ENCODE measurements at regions of chr10 and their contacts with region 1.

Region 1: GRCh38 chr10:7484456-7485243 is 73.8 kb upstream of the SFMBT2 start:
- DNase-seq: peak in 8 of 9 donors; percentile 49 to 89 (median 82)
- ATAC-seq: peak; percentile 92
- H3K4me3 ChIP-seq: peak overlapping the region; percentile 34
- H3K4me3 Mint-ChIP-seq: peak overlapping the region; percentile 54 to 85 (median 78)
- H3K27ac ChIP-seq: peak overlapping the region; percentile 73
- H3K27ac Mint-ChIP-seq: peak overlapping the region; percentile 93 to 100 (median 99)
- H3K4me1 ChIP-seq: peaks cover 63 to 75% of the 10 kb centered on the region in 2 donors
- H3K4me1 Mint-ChIP-seq: peaks cover 67 to 96% (median 94%) of the 10 kb centered on the region in 7 donors
- H3K27me3 ChIP-seq: no peaks in the 10 kb centered on the region
- H3K27me3 Mint-ChIP-seq: no peaks in the 10 kb centered on the region

Region 2: DNA sequence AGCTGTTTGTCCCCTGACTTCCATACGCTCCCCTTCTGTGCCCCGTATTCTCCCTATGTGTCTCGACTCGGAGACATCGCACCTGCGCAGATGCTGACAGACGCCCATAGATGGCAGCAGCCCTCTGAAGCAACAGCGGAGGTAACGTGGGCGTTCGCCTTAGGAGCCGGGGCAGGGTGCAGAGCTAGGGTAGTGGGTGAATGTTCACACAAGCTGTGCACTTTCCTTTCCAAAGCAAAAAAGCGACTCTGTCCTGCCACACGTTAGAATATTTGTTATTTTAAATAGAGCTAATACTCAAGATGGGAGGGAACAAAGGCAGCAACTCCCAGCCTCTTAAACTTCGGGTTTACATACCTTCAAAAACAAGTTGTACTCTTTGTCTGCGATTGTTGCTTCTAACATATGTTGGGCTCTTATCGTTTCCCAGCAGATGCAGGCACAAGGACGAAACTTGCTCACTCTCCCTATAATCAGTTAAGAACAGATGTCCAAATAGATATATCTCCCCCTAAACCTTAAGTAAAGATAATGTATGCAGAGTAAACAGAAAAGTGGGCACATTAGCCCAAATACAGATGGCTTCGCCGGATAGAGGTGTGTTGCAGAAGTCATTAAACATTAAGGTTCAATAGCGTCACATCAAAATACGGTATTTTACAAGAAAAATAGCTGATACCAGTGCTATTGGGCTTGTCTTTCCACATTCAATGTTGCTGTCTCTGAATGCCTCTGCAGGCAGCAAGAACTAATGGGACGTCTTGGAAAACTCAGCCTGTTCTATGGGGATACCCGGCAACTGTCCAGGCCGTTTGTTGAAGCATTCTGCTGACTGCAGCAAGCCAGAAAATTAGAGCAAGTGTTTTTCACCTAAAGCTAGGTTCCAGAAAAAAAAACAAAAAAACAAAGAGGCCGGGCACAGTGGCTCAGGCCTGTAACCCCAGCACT is 564.3 kb before region 1 on chr10:
- CTCF ChIA-PET with region 1: no interaction called
- POLR2A ChIA-PET with region 1: no interaction called
- intact Hi-C with region 1: loop called in 1 of 2 experiments (anchors 2 kb)
- DNase-seq: peak; percentile 47 to 74 (median 69)
- ATAC-seq: peak; percentile 97
- H3K4me3 ChIP-seq: no peak overlapping the region
- H3K4me3 Mint-ChIP-seq: peak overlapping the region in 7 of 10 donors; percentile 13 to 45 (median 26)
- H3K27ac ChIP-seq: no peak overlapping the region
- H3K27ac Mint-ChIP-seq: no peak overlapping the region
- H3K4me1 ChIP-seq: peaks cover 0 to 21% of the 10 kb centered on the region in 2 donors
- H3K4me1 Mint-ChIP-seq: peaks cover 0 to 25% (median 12%) of the 10 kb centered on the region in 7 donors
- H3K27me3 ChIP-seq: no peaks in the 10 kb centered on the region
- H3K27me3 Mint-ChIP-seq: peaks cover 0 to 14% (median 5%) of the 10 kb centered on the region in 5 donors

Region 3: GRCh38 chr10:7260412-7260900 is 224.2 kb before region 1 on chr10:
- CTCF ChIA-PET with region 1: no interaction called
- POLR2A ChIA-PET with region 1: no interaction called
- intact Hi-C with region 1: loop called (anchors 5 to 10 kb)
- DNase-seq: peak in 3 of 9 donors; percentile 16 to 33 (median 31)
- ATAC-seq: peak; percentile 73
- H3K4me3 ChIP-seq: no peak overlapping the region
- H3K4me3 Mint-ChIP-seq: peak overlapping the region in 8 of 10 donors; percentile 29 to 75 (median 61)
- H3K27ac ChIP-seq: no peak overlapping the region
- H3K27ac Mint-ChIP-seq: peak overlapping the region; percentile 51 to 94 (median 86)
- H3K4me1 ChIP-seq: peaks cover 27 to 30% of the 10 kb centered on the region in 2 donors
- H3K4me1 Mint-ChIP-seq: peaks cover 42 to 64% (median 57%) of the 10 kb centered on the region in 7 donors
- H3K27me3 ChIP-seq: no peaks in the 10 kb centered on the region
- H3K27me3 Mint-ChIP-seq: no peaks in the 10 kb centered on the region

Region 4: DNA sequence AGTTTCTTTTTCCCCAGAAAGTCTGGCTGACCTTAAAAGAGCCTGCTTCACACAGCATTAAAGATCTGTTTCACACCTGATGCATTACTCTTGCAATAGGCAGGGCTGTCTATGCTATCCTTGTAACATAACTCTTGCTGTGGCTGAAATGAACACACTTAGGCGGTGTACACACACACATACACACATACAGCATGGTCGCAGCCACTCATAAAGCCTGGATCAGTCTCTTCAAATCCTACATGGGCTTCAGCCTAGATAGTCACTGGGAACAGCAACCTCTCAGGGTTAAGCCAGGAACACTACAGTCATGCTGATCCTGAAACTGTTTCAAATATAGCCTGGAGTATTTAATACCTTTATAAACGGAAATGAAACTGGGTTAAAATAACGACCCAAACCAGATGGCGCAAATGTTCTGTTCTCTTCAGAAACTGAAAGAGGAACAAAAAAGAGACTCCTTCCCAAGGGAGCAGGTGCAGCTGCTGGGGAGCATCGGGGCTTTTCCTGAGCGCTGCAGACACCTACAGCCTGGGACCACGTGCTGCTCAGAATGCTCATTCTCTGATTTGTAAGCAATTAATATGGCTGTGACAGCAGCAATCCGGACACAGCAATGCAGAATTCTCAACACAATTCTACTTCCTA is 12.8 kb before region 1 on chr10:
- CTCF ChIA-PET with region 1: interaction called, 4 read pairs
- POLR2A ChIA-PET with region 1: interaction called, 14 read pairs
- intact Hi-C with region 1: loop called in 1 of 2 experiments (anchors 1 kb)
- DNase-seq: peak in 4 of 9 donors; percentile 6 to 19 (median 10)
- ATAC-seq: peak; percentile 72
- H3K4me3 ChIP-seq: peak overlapping the region; percentile 62
- H3K4me3 Mint-ChIP-seq: peak overlapping the region; percentile 73 to 93 (median 88)
- H3K27ac ChIP-seq: peak overlapping the region; percentile 51
- H3K27ac Mint-ChIP-seq: peak overlapping the region in 8 of 9 donors; percentile 72 to 91 (median 85)
- H3K4me1 ChIP-seq: peaks cover 10 to 19% of the 10 kb centered on the region in 2 donors
- H3K4me1 Mint-ChIP-seq: peaks cover 23 to 55% (median 36%) of the 10 kb centered on the region in 7 donors
- H3K27me3 ChIP-seq: no peaks in the 10 kb centered on the region
- H3K27me3 Mint-ChIP-seq: peaks cover 0 to 2% (median 0%) of the 10 kb centered on the region in 5 donors

Region 5: GRCh38 chr10:8790381-8790780 is 1305.7 kb after region 1 on chr10:
- CTCF ChIA-PET with region 1: no interaction called
- POLR2A ChIA-PET with region 1: no interaction called
- intact Hi-C with region 1: no loop called
- DNase-seq: no peak
- ATAC-seq: no peak
- H3K4me3 ChIP-seq: no peak overlapping the region
- H3K4me3 Mint-ChIP-seq: no peak overlapping the region
- H3K27ac ChIP-seq: no peak overlapping the region
- H3K27ac Mint-ChIP-seq: no peak overlapping the region
- H3K4me1 ChIP-seq: no peaks in the 10 kb centered on the region
- H3K4me1 Mint-ChIP-seq: peaks cover 0 to 11% (median 10%) of the 10 kb centered on the region in 7 donors
- H3K27me3 ChIP-seq: no peaks in the 10 kb centered on the region
- H3K27me3 Mint-ChIP-seq: peaks cover 0 to 13% (median 0%) of the 10 kb centered on the region in 5 donors

Region 6: DNA sequence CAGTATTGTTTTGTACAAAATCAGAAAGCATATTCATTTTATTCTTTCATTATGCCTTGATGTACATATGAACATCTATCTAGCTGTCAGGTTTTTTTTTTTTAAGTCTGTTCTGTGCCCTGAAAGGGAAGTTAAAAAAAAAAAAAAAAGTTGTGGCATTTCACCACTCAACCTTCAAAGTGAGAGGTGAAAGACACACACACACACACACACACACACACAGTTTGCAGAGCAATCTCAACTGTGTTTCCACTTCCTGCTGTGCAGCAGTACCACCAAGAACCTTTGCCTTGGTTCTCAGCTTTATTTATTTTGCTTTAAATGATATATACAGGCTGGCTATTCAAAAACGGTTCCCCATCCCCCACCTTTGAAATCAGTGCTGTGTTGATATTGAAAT is 1525.4 kb after region 1 on chr10:
- CTCF ChIA-PET with region 1: no interaction called
- POLR2A ChIA-PET with region 1: no interaction called
- intact Hi-C with region 1: loop called in 1 of 2 experiments (anchors 5 kb)
- DNase-seq: peak in 7 of 9 donors; percentile 62 to 87 (median 83)
- ATAC-seq: peak; percentile 94
- H3K4me3 ChIP-seq: no peak overlapping the region
- H3K4me3 Mint-ChIP-seq: peak overlapping the region in 9 of 10 donors; percentile 26 to 87 (median 65)
- H3K27ac ChIP-seq: no peak overlapping the region
- H3K27ac Mint-ChIP-seq: peak overlapping the region in 8 of 9 donors; percentile 72 to 96 (median 86)
- H3K4me1 ChIP-seq: peaks cover 5 to 28% of the 10 kb centered on the region in 2 donors
- H3K4me1 Mint-ChIP-seq: peaks cover 11 to 71% (median 55%) of the 10 kb centered on the region in 7 donors
- H3K27me3 ChIP-seq: no peaks in the 10 kb centered on the region
- H3K27me3 Mint-ChIP-seq: no peaks in the 10 kb centered on the region

Measured in naive thymus-derived CD4-positive, alpha-beta T cell (primary cell).